Prostate gland (tissue), 2 donors: ENCODE measurements at regions of chr19 and their contacts with region 1.

Region 1: DNA sequence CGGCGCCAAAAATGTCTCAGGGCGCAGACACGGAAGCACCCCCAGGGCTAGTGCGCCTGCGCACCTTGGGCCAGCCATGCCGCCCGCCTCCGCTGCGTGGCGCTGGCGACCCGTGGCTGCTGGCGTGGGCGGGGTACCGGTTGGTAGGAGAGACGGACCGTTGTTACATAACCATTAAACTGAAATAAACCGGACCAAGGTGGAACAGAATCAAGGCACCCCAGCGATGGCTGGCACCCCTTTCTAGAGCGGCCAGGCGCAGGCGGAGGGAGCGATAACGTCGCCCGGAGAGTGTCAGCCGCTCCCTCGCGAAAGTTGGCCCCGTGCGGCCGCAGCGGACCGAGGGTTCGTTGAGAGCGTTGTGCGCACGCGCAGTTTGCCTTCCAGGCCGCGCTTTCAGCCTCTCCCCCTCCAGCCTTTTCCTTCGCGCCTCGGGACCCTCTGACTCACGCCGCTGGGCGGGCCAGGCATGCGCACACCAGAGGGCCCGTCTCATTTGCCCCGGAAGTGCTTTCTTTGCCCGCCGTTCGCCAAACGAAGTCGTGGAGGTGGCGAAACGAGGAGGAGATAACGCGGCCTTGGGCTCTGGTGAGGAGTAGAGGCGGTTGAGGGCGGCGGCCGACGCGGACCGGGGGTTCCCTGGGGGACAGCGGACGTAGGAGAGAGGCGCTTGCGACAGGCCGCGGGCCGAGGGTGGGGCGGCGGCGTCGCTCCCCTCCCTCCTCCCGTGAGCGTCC is at the starts of genes PLEKHJ1 and SF3A2:
- DNase-seq: peak; percentile 91
- H3K4me3 ChIP-seq: peak within 1 kb of the TSS; percentile 81 to 95
- H3K27ac ChIP-seq: peak within 1 kb of the TSS; percentile 97 to 98
- H3K4me1 ChIP-seq: peaks cover 26% of the 10 kb centered on the region
- H3K27me3 ChIP-seq: no peaks in the 10 kb centered on the region
- CTCF ChIP-seq: peak; percentile 99 to 100 (median 100)
- POLR2A ChIP-seq: peak; percentile 64
- total RNA-seq, gene PLEKHJ1: 59.4 to 91.7 TPM
- total RNA-seq, gene SF3A2: 31.9 to 113 TPM

Region 2: DNA sequence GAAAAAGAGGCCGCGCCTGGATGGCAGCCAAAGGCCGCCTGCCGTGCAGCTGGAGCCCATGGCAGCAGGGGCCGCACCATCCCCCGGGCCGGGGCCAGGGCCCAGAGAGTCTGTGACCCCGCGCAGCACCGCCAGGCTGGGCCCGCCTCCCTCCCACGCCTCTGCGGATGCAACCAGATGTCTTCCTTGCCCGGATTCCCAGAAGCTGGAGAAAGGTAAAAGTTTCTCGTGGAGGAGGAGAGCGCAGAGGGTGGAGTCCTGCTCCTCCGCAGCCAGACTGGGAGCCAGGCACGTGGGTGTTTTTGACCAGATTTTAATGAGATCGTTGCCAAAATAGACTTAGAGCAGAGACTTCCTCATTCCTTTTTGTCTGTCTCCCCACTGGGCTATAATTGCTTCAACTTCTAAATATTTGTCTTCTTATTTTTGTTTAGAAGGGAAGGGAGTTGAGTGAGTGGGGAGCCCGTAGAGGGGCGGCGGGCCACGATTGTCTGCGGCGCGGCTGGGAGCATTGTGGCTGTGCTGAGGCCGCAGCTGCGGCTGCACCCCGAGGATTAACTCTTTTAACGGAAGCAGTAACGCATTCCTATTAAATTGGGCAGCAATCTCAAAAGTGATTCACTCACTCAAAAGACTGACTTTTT is 875.5 kb before region 1 on chr19:
- intact Hi-C with region 1: no loop called
- DNase-seq: no peak
- H3K4me3 ChIP-seq: peak overlapping the region in 1 of 2 donors; percentile 3
- H3K27ac ChIP-seq: peak overlapping the region; percentile 33
- H3K4me1 ChIP-seq: peaks cover 17% of the 10 kb centered on the region
- H3K27me3 ChIP-seq: no peaks in the 10 kb centered on the region
- CTCF ChIP-seq: no peak
- POLR2A ChIP-seq: no peak

Region 3: GRCh38 chr19:2135474-2136402 is 100.7 kb before region 1 on chr19:
- intact Hi-C with region 1: no loop called
- DNase-seq: no peak
- H3K4me3 ChIP-seq: no peak overlapping the region
- H3K27ac ChIP-seq: no peak overlapping the region
- H3K4me1 ChIP-seq: no peaks in the 10 kb centered on the region
- H3K27me3 ChIP-seq: no peaks in the 10 kb centered on the region
- CTCF ChIP-seq: no peak
- POLR2A ChIP-seq: no peak

Region 4: DNA sequence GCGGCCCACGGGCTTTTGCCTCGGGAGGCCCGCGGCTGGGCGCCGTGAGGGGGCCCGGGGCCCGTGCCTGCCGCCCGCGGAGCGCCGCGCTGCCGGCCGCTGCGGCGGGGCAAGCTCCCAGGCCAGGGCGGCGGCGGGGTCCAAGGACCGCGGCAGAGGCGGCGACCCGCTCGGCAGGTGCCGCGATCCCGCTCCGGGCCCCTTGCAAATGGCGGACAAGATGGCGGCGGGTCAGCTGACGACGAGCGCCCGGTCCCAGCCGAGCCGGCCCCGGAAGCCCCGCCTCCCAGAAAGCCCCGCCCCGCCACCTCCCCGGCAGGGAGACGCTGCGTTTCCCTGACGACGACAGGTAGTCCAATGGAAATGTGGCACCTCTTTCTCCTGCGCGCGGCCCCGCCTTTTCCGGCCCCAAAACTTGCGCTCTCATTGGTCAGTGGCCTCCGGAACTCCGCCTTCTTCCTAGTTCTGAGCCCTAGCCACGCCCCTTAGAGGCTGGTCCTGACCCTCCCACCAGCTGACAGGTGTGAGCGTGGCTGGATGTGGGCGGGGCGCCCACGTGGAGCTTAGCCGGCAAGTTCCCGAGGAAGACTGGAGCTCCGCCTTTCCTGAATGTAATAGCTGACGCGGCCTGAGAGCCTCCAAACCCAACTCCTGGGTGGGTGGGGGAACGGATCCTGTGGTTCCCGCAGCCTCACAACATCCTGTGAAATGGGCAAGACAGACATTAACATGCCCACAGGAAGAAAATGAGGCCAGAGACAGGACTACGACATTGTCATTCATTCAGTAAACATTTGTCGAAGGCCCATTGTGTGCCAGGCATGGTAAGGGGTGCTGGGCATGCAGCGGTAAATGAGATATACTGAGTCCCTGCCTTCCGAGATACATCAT is 84.9 kb before region 1 on chr19 and contains the start of gene AP3D1:
- intact Hi-C with region 1: loop called (anchors 5 kb)
- DNase-seq: peak; percentile 100
- H3K4me3 ChIP-seq: peak within 1 kb of the TSS; percentile 95
- H3K27ac ChIP-seq: peak within 1 kb of the TSS; percentile 74 to 78
- H3K4me1 ChIP-seq: peaks cover 5% of the 10 kb centered on the region
- H3K27me3 ChIP-seq: no peaks in the 10 kb centered on the region
- CTCF ChIP-seq: no peak
- POLR2A ChIP-seq: peak; percentile 43
- total RNA-seq, gene AP3D1: 115 to 178 TPM

Region 5: DNA sequence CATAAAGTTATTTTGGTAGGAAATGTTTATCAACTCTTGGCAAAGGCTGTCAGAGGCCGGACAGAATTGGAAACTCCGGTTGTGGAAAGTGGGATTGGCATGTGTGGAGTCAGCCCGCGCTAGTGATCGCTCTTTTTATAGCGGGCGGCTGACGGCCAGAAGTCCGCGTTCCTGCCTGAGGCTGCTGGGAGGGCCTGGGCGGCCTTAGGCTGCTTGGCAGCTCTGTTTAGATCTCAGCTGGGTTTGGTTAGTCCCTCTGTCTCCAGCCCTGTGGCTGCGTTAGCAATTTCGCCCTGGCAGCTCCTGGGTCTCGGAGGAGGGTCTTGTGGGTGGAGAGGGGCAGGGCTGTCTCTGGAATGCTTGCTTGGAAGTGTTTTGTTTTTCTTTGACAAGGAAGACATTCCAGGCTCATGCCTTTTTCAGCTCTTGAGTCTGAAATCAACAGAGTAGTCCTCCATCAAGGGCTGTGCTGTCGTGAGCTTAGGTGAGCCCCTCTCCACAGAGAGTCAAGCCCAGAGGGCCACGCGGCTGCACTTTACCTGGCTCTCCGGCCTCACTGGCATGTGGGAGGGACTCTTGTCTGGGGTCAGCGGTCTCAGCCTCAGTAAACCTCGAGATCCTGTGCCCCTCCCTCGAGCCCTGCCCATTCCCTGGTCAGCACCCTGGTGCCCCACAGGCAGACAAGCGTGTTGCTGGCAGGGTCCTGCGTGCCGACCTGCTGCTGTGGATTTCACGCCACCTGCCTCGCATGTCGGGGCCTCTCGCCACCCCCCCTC is 50.2 kb before region 1 on chr19:
- intact Hi-C with region 1: loop called (anchors 5 kb)
- DNase-seq: peak; percentile 84
- H3K4me3 ChIP-seq: peak overlapping the region in 1 of 2 donors; percentile 6
- H3K27ac ChIP-seq: peak overlapping the region; percentile 74 to 84
- H3K4me1 ChIP-seq: peaks cover 13% of the 10 kb centered on the region
- H3K27me3 ChIP-seq: no peaks in the 10 kb centered on the region
- CTCF ChIP-seq: peak in 1 of 4 experiments; percentile 7
- POLR2A ChIP-seq: no peak

Region 6: GRCh38 chr19:2328401-2329148 is 92.1 kb after region 1 on chr19 and contains the starts of genes LSM7 and SPPL2B:
- intact Hi-C with region 1: loop called (anchors 10 kb)
- DNase-seq: peak; percentile 86
- H3K4me3 ChIP-seq: peak within 1 kb of the TSS; percentile 85 to 94
- H3K27ac ChIP-seq: peak within 1 kb of the TSS; percentile 61
- H3K4me1 ChIP-seq: peaks cover 14% of the 10 kb centered on the region
- H3K27me3 ChIP-seq: no peaks in the 10 kb centered on the region
- CTCF ChIP-seq: peak in 1 of 4 experiments; percentile 37
- POLR2A ChIP-seq: peak; percentile 73
- total RNA-seq, gene LSM7: 125 to 135 TPM
- total RNA-seq, gene SPPL2B: 54.0 to 87.1 TPM

Region 7: GRCh38 chr19:2391118-2391725 is 154.7 kb after region 1 on chr19:
- intact Hi-C with region 1: loop called (anchors 5 kb)
- DNase-seq: peak; percentile 10
- H3K4me3 ChIP-seq: no peak overlapping the region
- H3K27ac ChIP-seq: no peak overlapping the region
- H3K4me1 ChIP-seq: no peaks in the 10 kb centered on the region
- H3K27me3 ChIP-seq: no peaks in the 10 kb centered on the region
- CTCF ChIP-seq: peak; percentile 64 to 80 (median 71)
- POLR2A ChIP-seq: no peak